H1 (cell line): ENCODE measurements at regions of chr1 and their contacts with region 1.

Region 1: DNA sequence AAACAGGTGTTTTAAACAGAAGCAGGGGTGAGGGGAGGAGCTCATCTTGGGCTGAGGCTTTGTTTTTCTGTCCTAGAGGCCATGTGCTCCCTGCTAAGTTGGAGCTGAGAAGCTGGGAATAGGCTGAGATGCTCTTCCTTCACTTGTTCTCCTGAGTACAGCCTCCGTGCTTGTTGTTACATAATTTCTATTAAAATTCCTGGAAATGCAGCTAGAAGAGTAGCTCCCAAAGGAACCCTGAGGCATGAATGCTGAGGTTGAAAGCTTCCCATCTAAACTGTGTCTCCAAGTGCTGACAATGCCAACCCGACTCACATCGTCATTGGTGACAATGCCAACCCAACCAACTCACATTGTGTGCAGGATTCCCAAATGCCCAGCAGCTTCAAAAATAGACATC is 12.6 kb upstream of the ITPKB start:
- DNase-seq: no peak
- H3K4me3 ChIP-seq: no peak overlapping the region
- H3K27ac ChIP-seq: no peak overlapping the region
- H3K4me1 ChIP-seq: no peaks in the 10 kb centered on the region
- H3K27me3 ChIP-seq: no peaks in the 10 kb centered on the region; a peak in 1 of 7 replicates
- CTCF ChIP-seq: no peak
- EP300 ChIP-seq: no peak
- POLR2A ChIP-seq: no peak
- RAD21 ChIP-seq: no peak

Region 2: GRCh38 chr1:226763905-226764264 is 12.2 kb after region 1 on chr1:
- CTCF ChIA-PET with region 1: interaction called, 13 read pairs
- POLR2A ChIA-PET with region 1: no interaction called
- DNase-seq: peak in 1 of 2 experiments; percentile 51
- H3K4me3 ChIP-seq: no peak overlapping the region
- H3K27ac ChIP-seq: no peak overlapping the region
- H3K4me1 ChIP-seq: peaks cover 2 to 13% (median 6%) of the 10 kb centered on the region in 4 experiments; a peak in 6 of 7 replicates
- H3K27me3 ChIP-seq: no peaks in the 10 kb centered on the region
- CTCF ChIP-seq: no peak
- EP300 ChIP-seq: no peak
- POLR2A ChIP-seq: no peak
- RAD21 ChIP-seq: no peak

Region 3: GRCh38 chr1:226875641-226876295 is 124.1 kb after region 1 on chr1:
- CTCF ChIA-PET with region 1: no interaction called
- POLR2A ChIA-PET with region 1: no interaction called
- DNase-seq: no peak
- H3K4me3 ChIP-seq: no peak overlapping the region
- H3K27ac ChIP-seq: no peak overlapping the region
- H3K4me1 ChIP-seq: peaks cover 4 to 12% (median 10%) of the 10 kb centered on the region in 4 experiments
- H3K27me3 ChIP-seq: peaks cover 0 to 10% (median 5%) of the 10 kb centered on the region in 4 experiments; a peak in 4 of 7 replicates
- CTCF ChIP-seq: no peak
- EP300 ChIP-seq: no peak
- POLR2A ChIP-seq: no peak
- RAD21 ChIP-seq: no peak